ENCODE measurements at regions of chr6 and their contacts with region 1.

Region 1: DNA sequence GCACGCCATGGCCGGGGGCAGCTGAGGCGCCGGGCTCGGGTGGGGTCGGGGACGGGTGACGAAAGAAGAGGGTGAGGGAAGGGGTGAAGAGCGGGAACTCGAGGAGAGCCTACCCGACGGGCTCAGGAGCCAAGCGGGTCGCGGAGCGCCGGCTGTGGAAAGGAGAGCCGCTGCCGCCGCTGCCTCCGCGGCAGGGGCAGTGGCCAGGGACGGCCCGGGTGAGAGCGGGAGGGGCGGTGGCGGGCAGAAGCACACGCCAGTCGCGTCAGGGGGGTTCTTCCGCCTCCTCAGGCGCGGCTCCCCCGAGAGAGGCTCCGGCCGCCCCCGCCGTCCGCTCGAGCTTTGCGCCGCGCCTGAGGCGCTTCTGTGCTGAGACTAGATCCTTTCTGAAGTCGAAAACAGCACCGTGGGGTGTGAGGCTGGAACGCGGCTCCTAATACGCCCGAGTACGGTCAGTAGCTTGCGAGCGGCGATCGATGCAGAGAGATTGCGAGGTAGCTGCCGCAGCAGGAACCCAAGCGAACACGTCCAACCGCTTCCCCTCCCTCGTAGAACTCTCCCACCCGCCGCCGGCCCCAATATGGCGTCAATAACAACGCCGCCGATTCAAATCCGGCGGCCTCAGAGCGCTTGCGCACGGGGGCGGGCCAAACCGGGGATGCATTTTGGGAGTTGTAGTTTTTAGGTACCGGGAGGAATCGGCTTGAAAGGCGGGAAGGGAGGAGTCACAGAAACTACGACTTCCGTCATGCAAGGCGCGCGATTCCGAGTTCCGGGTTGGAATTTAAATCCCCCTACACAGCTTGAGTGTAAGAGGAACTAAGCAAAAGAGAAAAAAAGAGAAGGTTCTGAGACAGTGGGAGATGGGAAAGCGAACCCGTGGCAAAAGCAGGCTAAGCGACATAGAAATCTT is at the start of gene AKIRIN2:
- DNase-seq: peak; percentile 92 to 98
- H3K4me3 ChIP-seq: peak within 1 kb of the TSS; percentile 92 to 97
- H3K27ac ChIP-seq: peak within 1 kb of the TSS; percentile 96 to 99
- H3K4me1 ChIP-seq: peaks cover 0 to 7% of the 10 kb centered on the region in 2 donors
- H3K27me3 ChIP-seq: no peaks in the 10 kb centered on the region
- CTCF ChIP-seq: no peak
- total RNA-seq, gene AKIRIN2: 39.1 TPM

Region 2: GRCh38 chr6:87154993-87155841 is 546.7 kb before region 1 on chr6 and contains the start of gene ZNF292:
- intact Hi-C with region 1: loop called (anchors 5 kb)
- DNase-seq: peak; percentile 95 to 98
- H3K4me3 ChIP-seq: peak within 1 kb of the TSS; percentile 80 to 94
- H3K27ac ChIP-seq: peak within 1 kb of the TSS; percentile 93 to 95
- H3K4me1 ChIP-seq: peaks cover 0 to 12% of the 10 kb centered on the region in 2 donors
- H3K27me3 ChIP-seq: no peaks in the 10 kb centered on the region
- CTCF ChIP-seq: no peak
- total RNA-seq, gene ZNF292: 19.1 TPM

Region 3: DNA sequence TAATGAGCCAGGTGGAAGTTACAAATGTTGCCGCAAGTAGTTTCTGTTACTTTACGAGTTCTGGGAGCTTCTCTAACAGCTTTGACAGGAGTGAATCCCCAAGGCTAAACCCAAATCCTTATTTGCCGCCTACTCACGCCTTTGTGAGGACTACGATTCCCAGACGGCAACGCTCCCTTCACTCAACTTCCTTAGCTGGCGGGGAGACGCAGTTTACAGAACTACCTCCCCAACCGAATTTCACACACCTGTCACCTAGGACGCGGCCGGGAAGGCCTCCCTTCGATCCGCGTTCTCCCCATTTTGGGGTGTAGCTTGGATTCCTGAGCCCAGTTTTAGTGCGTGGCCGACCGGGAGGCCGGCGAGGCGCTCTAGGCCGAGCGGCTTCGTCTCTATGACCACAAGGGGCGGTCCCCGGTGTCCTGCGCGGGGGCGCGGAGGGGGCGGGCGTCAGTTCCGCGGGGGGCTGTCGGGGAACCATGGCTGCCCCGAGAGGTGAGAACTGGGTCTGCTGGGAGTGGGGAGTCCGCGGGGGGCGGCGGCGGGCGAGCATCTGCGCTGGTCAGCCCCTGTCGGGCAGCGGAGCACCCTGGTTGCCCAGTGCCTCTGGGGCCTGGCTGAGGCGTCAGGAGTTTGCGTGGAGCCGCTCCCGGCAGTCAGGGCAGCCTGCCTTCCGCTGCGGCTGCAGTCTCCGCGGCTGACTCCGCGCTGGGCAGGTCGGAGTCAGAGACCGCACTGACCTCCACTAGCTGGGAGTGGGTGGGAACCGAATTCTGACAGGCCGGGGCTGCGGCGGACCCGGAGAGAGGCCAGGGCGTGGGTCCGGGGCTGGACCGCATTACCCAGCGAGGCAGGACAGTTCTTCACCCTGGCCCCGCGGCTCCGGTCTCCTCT is 229.2 kb before region 1 on chr6 and contains the start of gene SLC35A1:
- intact Hi-C with region 1: loop called (anchors 2 kb)
- DNase-seq: peak; percentile 30 to 92
- H3K4me3 ChIP-seq: peak within 1 kb of the TSS; percentile 85 to 96
- H3K27ac ChIP-seq: peak within 1 kb of the TSS; percentile 82 to 93
- H3K4me1 ChIP-seq: peaks cover 0 to 3% of the 10 kb centered on the region in 2 donors
- H3K27me3 ChIP-seq: no peaks in the 10 kb centered on the region
- CTCF ChIP-seq: peak in 1 of 3 experiments; percentile 15
- total RNA-seq, gene SLC35A1: 7.9 TPM

Region 4: GRCh38 chr6:87494761-87495422 is 207.0 kb before region 1 on chr6:
- intact Hi-C with region 1: no loop called
- DNase-seq: no peak
- H3K4me3 ChIP-seq: no peak overlapping the region
- H3K27ac ChIP-seq: no peak overlapping the region
- H3K4me1 ChIP-seq: no peaks in the 10 kb centered on the region
- H3K27me3 ChIP-seq: no peaks in the 10 kb centered on the region
- CTCF ChIP-seq: no peak

Region 5: GRCh38 chr6:87656857-87657256 is 45.1 kb before region 1 on chr6:
- intact Hi-C with region 1: loop called (anchors 5 kb)
- DNase-seq: no peak
- H3K4me3 ChIP-seq: no peak overlapping the region
- H3K27ac ChIP-seq: no peak overlapping the region
- H3K4me1 ChIP-seq: peaks cover 0 to 13% of the 10 kb centered on the region in 2 donors
- H3K27me3 ChIP-seq: no peaks in the 10 kb centered on the region
- CTCF ChIP-seq: no peak

Region 6: GRCh38 chr6:88380083-88380482 is 678.2 kb after region 1 on chr6:
- intact Hi-C with region 1: loop called (anchors 5 kb)
- DNase-seq: peak; percentile 12 to 90
- H3K4me3 ChIP-seq: no peak overlapping the region
- H3K27ac ChIP-seq: peak overlapping the region; percentile 62 to 70
- H3K4me1 ChIP-seq: peaks cover 6 to 26% of the 10 kb centered on the region in 2 donors
- H3K27me3 ChIP-seq: no peaks in the 10 kb centered on the region
- CTCF ChIP-seq: no peak

Measured in ascending aorta (tissue), 2 donors.